ENCODE measurements at regions of chr14 and their contacts with region 1.

Region 1: GRCh38 chr14:54347997-54348611 is 48.7 kb upstream of the CDKN3 start:
- DNase-seq: peak; percentile 68
- H3K4me3 Mint-ChIP-seq: no peak overlapping the region
- H3K27ac Mint-ChIP-seq: no peak overlapping the region
- H3K4me1 Mint-ChIP-seq: peaks cover 6% of the 10 kb centered on the region
- H3K27me3 Mint-ChIP-seq: no peaks in the 10 kb centered on the region
- CTCF ChIP-seq: peak; percentile 82

Region 2: DNA sequence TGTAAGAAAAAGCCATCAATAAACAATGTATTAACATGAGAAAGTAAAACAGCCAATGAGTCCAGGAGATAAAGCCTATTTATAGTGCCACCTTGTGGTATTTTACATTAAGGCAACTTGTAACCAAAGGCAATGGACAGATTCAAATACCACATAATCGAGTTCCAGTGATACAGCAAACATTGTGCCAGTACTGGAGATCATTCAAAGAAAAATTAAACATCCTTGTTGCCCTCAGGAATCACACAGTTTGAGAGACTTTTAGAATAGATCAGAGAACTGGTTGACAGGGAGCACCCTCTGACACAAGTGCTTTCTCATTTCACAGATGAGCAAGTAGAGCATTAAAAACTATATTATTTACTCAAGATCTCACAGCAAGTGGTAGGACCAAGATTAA is 1293.1 kb before region 1 on chr14:
- CTCF ChIA-PET with region 1: interaction called, 3 read pairs
- POLR2A ChIA-PET with region 1: no interaction called
- intact Hi-C with region 1: loop called (anchors 5 kb)
- DNase-seq: peak; percentile 65
- H3K4me3 Mint-ChIP-seq: no peak overlapping the region
- H3K27ac Mint-ChIP-seq: no peak overlapping the region
- H3K4me1 Mint-ChIP-seq: no peaks in the 10 kb centered on the region
- H3K27me3 Mint-ChIP-seq: no peaks in the 10 kb centered on the region
- CTCF ChIP-seq: peak; percentile 56

Region 3: DNA sequence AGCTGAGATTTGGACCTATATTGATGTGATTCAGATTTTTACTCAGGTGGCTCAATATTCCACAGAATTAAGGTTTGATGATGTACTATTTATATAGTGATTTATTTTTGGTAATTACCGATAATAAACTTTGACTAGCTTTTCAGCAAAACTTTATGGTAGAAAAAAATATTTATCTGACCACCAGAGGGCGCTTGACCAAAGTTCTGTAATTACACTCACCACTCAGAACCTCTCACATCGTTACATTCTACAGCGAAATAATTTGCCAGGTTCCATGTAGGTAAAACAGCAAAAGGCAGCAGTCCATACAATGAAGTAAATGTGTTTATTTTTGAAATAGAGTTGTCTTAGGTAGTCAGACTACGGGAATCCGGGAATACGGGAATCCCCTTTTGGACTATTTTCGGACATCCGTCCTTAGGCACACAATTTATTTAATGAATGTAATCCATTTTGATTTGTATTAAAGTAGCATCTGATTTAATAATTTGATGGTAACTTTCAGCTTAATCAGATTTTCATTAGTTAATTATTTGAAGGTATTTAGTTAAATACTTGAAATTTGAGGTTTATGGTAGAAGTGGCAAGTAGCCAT is 1052.0 kb before region 1 on chr14:
- CTCF ChIA-PET with region 1: interaction called, 16 read pairs
- POLR2A ChIA-PET with region 1: no interaction called
- intact Hi-C with region 1: loop called (anchors 2 kb)
- DNase-seq: peak; percentile 52
- H3K4me3 Mint-ChIP-seq: no peak overlapping the region
- H3K27ac Mint-ChIP-seq: no peak overlapping the region
- H3K4me1 Mint-ChIP-seq: no peaks in the 10 kb centered on the region
- H3K27me3 Mint-ChIP-seq: no peaks in the 10 kb centered on the region
- CTCF ChIP-seq: peak; percentile 57

Region 4: GRCh38 chr14:53432378-53432802 is 915.7 kb before region 1 on chr14:
- CTCF ChIA-PET with region 1: interaction called, 13 read pairs
- POLR2A ChIA-PET with region 1: no interaction called
- intact Hi-C with region 1: no loop called
- DNase-seq: peak; percentile 56
- H3K4me3 Mint-ChIP-seq: no peak overlapping the region
- H3K27ac Mint-ChIP-seq: no peak overlapping the region
- H3K4me1 Mint-ChIP-seq: no peaks in the 10 kb centered on the region
- H3K27me3 Mint-ChIP-seq: no peaks in the 10 kb centered on the region
- CTCF ChIP-seq: peak; percentile 68

Region 5: GRCh38 chr14:53929871-53930715 is 418.0 kb before region 1 on chr14:
- CTCF ChIA-PET with region 1: interaction called, 14 read pairs
- POLR2A ChIA-PET with region 1: no interaction called
- intact Hi-C with region 1: no loop called
- DNase-seq: peak; percentile 48
- H3K4me3 Mint-ChIP-seq: no peak overlapping the region
- H3K27ac Mint-ChIP-seq: no peak overlapping the region
- H3K4me1 Mint-ChIP-seq: peaks cover 15% of the 10 kb centered on the region
- H3K27me3 Mint-ChIP-seq: no peaks in the 10 kb centered on the region
- CTCF ChIP-seq: peak; percentile 44

Measured in MCF 10A (cell line).